ENCODE measurements at regions of chr9 and their contacts with region 1.

Region 1: DNA sequence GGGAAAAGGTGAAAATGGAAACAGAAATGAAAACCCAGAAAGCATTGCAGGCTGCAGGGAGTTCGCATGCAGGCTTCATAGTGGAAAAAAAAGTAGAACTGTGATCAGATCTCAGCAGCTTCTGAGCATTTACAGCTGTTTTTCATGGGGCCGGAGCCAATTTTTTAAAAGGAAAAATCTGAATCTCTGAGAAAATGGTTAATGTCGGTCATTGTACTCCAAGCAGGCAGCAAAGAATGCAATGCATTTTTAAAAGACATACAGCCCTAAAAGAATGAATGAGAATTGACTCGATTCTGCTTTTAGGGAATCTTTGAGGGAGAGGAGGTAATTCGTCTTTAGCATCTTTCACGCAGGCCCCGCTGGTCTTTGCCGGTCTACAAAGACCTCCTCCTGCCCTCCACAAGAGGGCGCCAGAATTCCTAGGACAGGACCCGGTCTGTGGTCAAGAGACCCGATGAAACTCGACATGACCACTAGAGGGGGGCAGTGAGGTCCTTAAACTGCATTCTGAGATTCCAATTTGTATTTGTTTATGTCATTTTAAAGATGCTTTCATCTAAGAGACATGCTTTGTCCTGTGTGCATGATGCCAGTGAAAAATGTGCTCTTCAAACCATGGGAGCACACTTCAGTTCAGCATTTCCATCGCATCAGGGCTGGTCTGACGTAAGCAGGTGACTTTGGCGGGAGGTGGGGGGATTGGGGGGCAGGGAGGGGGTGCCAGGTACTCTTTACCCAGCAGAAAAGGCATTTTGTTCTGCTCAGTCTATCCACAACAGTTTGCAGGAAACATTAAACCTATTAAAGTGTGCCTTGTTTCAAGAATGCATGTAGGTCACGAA is 43.7 kb upstream of the TMEM252 start:
- ATAC-seq: peak; percentile 85 to 100 (median 96)
- H3K4me3 ChIP-seq: no peak overlapping the region
- H3K27ac ChIP-seq: no peak overlapping the region
- H3K4me1 ChIP-seq: no peaks in the 10 kb centered on the region

Region 2: GRCh38 chr9:68685770-68686169 is 101.4 kb after region 1 on chr9:
- in situ Hi-C with region 1: loop called in 1 of 9 experiments (anchors 25 kb)
- ATAC-seq: peak in 3 of 8 experiments; percentile 27 to 80 (median 78)
- H3K4me3 ChIP-seq: no peak overlapping the region
- H3K27ac ChIP-seq: no peak overlapping the region
- H3K4me1 ChIP-seq: peaks cover 0 to 4% of the 10 kb centered on the region in 2 donors

Region 3: GRCh38 chr9:68844631-68845612 is 260.5 kb after region 1 on chr9:
- in situ Hi-C with region 1: loop called in 1 of 9 experiments (anchors 25 kb)
- ATAC-seq: peak in 3 of 8 experiments; percentile 33 to 68 (median 52)
- H3K4me3 ChIP-seq: no peak overlapping the region
- H3K27ac ChIP-seq: no peak overlapping the region
- H3K4me1 ChIP-seq: no peaks in the 10 kb centered on the region

Region 4: DNA sequence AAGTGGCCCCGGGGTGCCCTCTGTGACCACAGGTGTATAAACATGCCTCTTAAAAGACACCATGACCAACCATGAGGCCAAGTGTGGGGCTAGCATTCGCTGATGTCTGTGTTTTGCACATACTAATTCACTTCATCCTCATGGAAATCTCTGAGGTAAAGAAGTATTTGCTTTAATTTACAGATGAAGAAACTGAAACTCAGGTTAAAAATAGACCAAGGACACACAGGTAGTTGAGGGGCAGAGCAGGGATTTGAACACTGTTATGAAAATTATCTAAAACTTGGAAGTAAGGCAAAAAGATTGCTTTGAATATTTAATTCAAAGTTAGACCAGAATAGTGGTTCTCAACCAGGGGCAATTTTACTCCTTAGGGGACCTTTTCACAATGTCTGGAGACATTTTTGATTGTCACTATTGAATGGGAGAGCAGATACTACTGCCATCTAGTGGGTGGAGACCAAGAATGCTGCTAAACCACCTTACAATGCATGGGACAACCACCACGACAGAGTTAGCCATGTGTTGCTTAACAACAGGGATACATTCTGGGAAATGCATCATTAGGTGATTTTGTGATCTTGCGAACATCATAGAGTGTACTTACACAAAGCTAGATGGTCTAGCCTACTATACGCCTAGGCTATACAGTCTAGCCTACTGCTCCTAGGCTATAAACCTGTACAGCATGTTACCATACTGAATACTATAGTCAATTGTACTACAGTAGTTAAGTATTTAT is 443.1 kb after region 1 on chr9:
- in situ Hi-C with region 1: loop called in 3 of 9 experiments (anchors 10 to 25 kb)
- ATAC-seq: peak; percentile 58 to 90 (median 74)
- H3K4me3 ChIP-seq: no peak overlapping the region
- H3K27ac ChIP-seq: no peak overlapping the region
- H3K4me1 ChIP-seq: peaks cover 3 to 5% of the 10 kb centered on the region in 2 donors